MCF 10A (cell line): ENCODE measurements at regions of chr1 and their contacts with region 1.

Region 1: GRCh38 chr1:24391882-24392603 is 21.5 kb downstream of the STPG1 start:
- DNase-seq: peak; percentile 71
- H3K4me3 Mint-ChIP-seq: peak overlapping the region; percentile 64
- H3K27ac Mint-ChIP-seq: peak overlapping the region; percentile 97
- H3K4me1 Mint-ChIP-seq: peaks cover 55% of the 10 kb centered on the region
- H3K27me3 Mint-ChIP-seq: no peaks in the 10 kb centered on the region
- CTCF ChIP-seq: peak; percentile 87

Region 2: GRCh38 chr1:24186993-24187805 is 204.8 kb before region 1 on chr1 and contains the start of gene IFNLR1:
- CTCF ChIA-PET with region 1: interaction called, 25 read pairs
- POLR2A ChIA-PET with region 1: interaction called, 4 read pairs
- intact Hi-C with region 1: no loop called
- DNase-seq: no peak
- H3K4me3 Mint-ChIP-seq: peak within 1 kb of the TSS; percentile 51
- H3K27ac Mint-ChIP-seq: no peak within 1 kb of the TSS
- H3K4me1 Mint-ChIP-seq: peaks cover 19% of the 10 kb centered on the region
- H3K27me3 Mint-ChIP-seq: no peaks in the 10 kb centered on the region
- CTCF ChIP-seq: no peak
- total RNA-seq, gene IFNLR1: 0.12 and 0.19 TPM in 2 replicates

Region 3: DNA sequence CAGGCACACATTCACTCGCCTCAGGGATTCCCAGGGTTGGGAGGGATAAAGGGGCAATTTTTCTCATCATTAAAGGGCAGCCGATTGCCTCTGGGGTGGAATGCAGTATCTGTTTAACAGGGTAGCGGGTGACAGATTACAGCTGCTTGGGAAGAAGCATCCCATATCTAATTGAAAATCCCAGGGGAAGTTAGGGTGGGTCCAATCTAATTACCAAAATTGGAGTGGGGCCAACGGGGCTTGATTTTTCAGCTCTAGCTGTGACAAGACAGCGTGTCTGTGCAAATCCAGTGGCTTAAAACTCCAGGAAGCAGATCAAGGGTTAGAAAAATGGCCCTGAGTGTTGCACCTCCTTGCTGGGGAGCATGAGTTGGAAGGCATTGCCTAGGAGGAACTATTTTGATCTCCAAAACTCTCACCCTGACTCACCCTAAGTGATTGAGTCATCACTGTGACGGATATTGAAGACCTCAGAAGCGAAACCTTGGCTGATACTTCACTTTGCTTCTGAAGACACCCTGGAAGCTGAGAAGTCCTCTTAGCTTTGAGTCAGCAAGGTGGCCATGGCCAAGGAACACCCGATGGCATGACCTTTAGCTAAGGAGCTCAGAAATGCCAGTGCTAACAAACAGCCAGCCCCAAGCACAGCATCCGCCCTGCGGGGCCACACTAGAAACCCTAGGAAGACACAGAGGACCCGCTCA is 26.9 kb before region 1 on chr1:
- CTCF ChIA-PET with region 1: interaction called, 13 read pairs
- POLR2A ChIA-PET with region 1: interaction called, 6 read pairs
- intact Hi-C with region 1: loop called (anchors 2 kb)
- DNase-seq: peak; percentile 98
- H3K4me3 Mint-ChIP-seq: peak overlapping the region; percentile 28
- H3K27ac Mint-ChIP-seq: peak overlapping the region; percentile 89
- H3K4me1 Mint-ChIP-seq: peaks cover 33% of the 10 kb centered on the region
- H3K27me3 Mint-ChIP-seq: no peaks in the 10 kb centered on the region
- CTCF ChIP-seq: no peak

Region 4: DNA sequence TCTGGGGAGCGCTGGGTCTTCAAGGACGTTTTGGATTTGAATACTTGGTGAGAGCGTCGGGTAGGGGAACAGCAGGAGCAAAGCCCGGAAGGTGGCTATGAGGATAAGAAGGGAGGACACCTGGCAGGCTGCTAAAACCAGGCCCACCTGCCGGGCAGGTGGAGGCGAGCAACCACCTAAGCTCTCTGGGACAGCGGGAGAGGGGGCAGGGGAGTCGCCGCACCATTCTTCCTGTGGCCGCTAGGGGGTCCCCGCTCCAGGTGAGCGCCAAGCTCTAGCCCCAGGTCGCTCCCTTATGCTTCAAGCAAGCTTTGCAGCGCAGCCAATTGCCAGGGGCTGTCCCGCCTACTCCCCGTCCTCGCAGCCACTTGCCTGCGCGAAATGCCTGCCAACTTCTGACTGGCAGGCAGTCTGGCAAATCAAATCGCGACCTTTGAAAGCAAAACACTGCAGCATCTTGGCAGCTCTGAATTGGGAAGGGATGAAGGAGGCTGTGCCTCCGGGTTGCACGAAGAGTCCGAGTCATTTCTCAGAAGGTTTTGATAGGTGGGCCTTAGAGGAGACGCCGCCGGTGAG is 23.4 kb after region 1 on chr1 and contains the start of gene NIPAL3:
- CTCF ChIA-PET with region 1: interaction called, 57 read pairs
- POLR2A ChIA-PET with region 1: interaction called, 86 read pairs
- intact Hi-C with region 1: no loop called
- DNase-seq: peak; percentile 99
- H3K4me3 Mint-ChIP-seq: peak within 1 kb of the TSS; percentile 93
- H3K27ac Mint-ChIP-seq: peak within 1 kb of the TSS; percentile 98
- H3K4me1 Mint-ChIP-seq: peaks cover 45% of the 10 kb centered on the region
- H3K27me3 Mint-ChIP-seq: no peaks in the 10 kb centered on the region
- CTCF ChIP-seq: peak; percentile 84
- total RNA-seq, gene NIPAL3: 47.7 and 55.8 TPM in 2 replicates

Region 5: DNA sequence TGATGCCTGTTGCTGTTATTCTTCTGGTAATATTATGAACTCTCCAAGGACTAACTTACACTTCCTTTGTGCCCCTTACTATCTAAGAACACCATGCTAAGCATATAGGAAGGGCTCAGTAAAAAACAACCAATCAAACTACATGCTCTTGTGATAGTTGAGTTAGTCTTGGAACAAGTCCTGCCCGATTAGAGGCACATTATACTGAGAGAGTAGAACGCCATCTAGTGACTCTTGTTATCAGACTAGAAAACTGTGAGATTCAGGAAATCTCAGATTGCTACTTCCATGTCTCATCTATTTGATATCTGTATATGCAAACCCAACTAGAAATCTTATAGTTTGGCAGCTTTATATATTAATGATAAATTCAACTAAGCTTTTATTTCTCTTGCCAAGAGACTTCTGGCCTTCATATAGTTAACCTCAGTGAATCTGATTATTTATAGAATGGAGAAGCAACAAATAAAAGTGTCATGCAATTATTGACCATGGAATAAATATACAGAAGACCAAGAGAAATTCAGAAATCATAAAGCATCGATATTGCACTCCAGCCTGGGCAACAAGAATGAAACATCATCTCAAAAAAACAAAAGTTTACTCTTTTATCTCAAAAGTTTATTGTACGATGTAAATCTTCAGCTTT is 243.3 kb after region 1 on chr1:
- CTCF ChIA-PET with region 1: interaction called, 17 read pairs
- POLR2A ChIA-PET with region 1: no interaction called
- intact Hi-C with region 1: loop called (anchors 1 kb)
- DNase-seq: peak; percentile 72
- H3K4me3 Mint-ChIP-seq: no peak overlapping the region
- H3K27ac Mint-ChIP-seq: no peak overlapping the region
- H3K4me1 Mint-ChIP-seq: peaks cover 12% of the 10 kb centered on the region
- H3K27me3 Mint-ChIP-seq: peaks cover 22% of the 10 kb centered on the region
- CTCF ChIP-seq: peak; percentile 44